ENCODE measurements at regions of chr16 and their contacts with region 1.

Region 1: DNA sequence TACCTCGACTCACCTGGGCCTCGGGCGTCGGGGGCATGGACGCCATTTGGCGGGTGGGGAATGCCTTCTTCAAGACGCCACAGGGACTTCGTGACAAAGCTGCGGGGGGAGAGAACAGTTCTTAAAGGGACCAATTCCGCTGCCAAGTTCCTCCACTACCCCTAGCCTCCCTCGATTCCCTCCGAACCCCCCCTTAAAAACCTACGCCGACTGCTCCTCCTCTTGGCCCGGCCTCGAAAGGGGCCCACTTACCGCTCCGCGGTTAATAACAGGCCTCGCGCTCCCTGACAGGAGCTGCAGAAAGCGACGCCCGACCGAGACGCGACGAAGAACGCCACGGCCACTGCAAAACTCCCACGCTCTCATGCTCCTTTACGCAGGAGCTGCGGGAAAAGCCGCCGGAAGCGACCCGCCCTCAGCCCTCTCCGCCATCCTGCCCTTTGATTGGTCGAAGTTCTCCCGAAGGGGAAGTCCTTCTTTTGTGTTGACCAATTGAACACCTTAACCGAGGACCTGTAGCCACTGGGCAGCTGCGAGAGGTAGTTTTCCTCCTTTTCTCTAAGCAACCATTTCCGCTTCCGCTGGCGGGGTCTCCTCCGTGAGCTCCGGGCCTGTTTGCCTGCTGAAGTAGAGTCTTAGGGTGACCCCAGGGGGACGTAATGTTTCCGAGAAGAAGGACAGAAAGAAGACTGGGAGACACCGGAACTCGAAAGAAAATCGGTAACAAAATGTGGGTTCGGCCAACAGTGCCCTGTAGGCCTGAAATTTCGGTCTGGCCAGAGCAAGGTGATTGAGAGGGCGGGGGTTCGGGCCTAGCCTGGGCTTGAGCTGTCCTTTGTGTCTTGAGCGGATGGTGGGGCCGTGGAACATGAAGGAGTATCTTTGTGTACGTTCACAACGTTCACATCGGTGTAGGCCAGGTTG is at the starts of genes NAA60 and ZNF597:
- DNase-seq: peak; percentile 47 to 87 (median 73)
- ATAC-seq: peak; percentile 96 to 99 (median 98)
- H3K4me3 ChIP-seq: peak within 1 kb of the TSS; percentile 54 to 75
- H3K4me3 Mint-ChIP-seq: peak within 1 kb of the TSS; percentile 92 to 97 (median 97)
- H3K27ac ChIP-seq: peak within 1 kb of the TSS; percentile 76
- H3K27ac Mint-ChIP-seq: peak within 1 kb of the TSS; percentile 94 to 95
- H3K4me1 ChIP-seq: peaks cover 5 to 13% of the 10 kb centered on the region in 2 experiments
- H3K4me1 Mint-ChIP-seq: peaks cover 25 to 43% (median 35%) of the 10 kb centered on the region in 3 donors
- H3K27me3 ChIP-seq: peaks cover 0 to 4% of the 10 kb centered on the region in 2 experiments
- H3K27me3 Mint-ChIP-seq: peaks cover 0 to 8% of the 10 kb centered on the region in 2 donors
- total RNA-seq, gene NAA60: 40.9 to 67.6 (median 55.6) TPM
- total RNA-seq, gene ZNF597: 2.2 to 4.8 (median 4.3) TPM

Region 2: GRCh38 chr16:3520413-3520812 is 77.0 kb after region 1 on chr16:
- CTCF ChIA-PET with region 1: no interaction called
- POLR2A ChIA-PET with region 1: interaction called in 1 of 2 experiments, 12 read pairs
- DNase-seq: no peak
- ATAC-seq: no peak
- H3K4me3 ChIP-seq: no peak overlapping the region
- H3K4me3 Mint-ChIP-seq: no peak overlapping the region
- H3K27ac ChIP-seq: no peak overlapping the region
- H3K27ac Mint-ChIP-seq: no peak overlapping the region
- H3K4me1 ChIP-seq: no peaks in the 10 kb centered on the region
- H3K4me1 Mint-ChIP-seq: peaks cover 2 to 6% (median 5%) of the 10 kb centered on the region in 3 donors
- H3K27me3 ChIP-seq: no peaks in the 10 kb centered on the region
- H3K27me3 Mint-ChIP-seq: no peaks in the 10 kb centered on the region

Measured in T-cell (primary cell).